ENCODE measurements at regions of chr19 and their contacts with region 1.

Region 1: DNA sequence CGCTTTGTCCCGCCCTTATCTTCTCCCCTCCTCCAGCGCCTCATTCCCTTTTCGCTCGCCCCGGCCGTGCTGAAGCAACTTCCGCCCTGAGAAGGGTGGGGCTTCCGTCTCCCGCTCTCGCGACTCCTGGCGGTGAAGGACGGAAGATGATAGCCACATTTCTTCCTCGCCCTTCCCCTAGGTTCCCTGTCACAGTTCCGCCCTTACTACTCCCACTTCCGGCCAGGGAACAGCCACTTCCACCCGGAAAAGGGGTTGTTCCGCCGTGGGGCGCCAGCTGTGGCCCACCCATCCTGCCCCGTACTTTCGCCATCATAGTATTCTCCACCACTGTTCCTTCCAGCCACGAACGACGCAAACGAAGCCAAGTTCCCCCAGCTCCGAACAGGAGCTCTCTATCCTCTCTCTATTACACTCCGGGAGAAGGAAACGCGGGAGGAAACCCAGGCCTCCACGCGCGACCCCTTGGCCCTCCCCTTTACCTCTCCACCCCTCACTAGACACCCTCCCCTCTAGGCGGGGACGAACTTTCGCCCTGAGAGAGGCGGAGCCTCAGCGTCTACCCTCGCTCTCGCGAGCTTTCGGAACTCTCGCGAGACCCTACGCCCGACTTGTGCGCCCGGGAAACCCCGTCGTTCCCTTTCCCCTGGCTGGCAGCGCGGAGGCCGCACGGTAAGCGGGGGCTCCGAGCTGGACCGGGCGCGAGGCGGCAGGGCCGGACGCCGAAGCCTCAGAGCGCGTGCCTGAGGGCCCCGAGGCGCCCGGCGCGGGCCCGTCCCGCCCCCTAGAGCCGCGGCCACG is at the start of gene RPS19:
- DNase-seq: peak; percentile 98 to 99
- H3K4me3 ChIP-seq: peak within 1 kb of the TSS; percentile 88
- H3K4me3 Mint-ChIP-seq: peak within 1 kb of the TSS; percentile 84
- H3K27ac Mint-ChIP-seq: peak within 1 kb of the TSS; percentile 94
- H3K4me1 ChIP-seq: peaks cover 18% of the 10 kb centered on the region
- H3K4me1 Mint-ChIP-seq: peaks cover 5% of the 10 kb centered on the region
- H3K27me3 ChIP-seq: no peaks in the 10 kb centered on the region
- H3K27me3 Mint-ChIP-seq: peaks cover 1% of the 10 kb centered on the region
- CTCF ChIP-seq: peak; percentile 63 to 81
- total RNA-seq, gene RPS19: 3,297 and 3,418 TPM in 2 replicates

Region 2: DNA sequence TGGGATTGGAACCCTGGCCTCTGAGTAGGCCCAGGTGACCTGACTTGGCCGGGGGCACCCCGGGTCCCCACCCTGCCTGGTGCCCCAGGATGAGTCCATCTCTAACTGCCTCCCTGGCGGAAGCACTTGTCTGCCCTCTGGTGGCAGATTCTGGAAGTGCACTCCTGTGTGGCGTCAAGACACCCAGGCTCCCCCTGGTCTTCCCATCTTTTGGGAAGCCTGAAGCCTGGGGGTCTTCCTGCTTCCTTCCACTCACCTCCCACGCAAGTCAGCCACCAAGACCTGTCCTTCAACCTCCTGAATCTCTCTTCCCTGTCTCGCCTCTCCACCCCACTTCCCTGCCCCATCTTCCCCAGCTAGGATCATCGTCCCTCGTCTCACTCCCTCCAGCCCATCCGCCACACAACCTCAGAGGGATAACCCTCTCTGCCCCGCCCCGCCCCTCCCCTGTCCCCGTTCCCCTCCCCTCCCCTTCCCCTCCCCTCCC is 91.9 kb after region 1 on chr19:
- CTCF ChIA-PET with region 1: no interaction called
- POLR2A ChIA-PET with region 1: no interaction called
- intact Hi-C with region 1: loop called (anchors 1 kb)
- DNase-seq: peak; percentile 84 to 89
- H3K4me3 ChIP-seq: no peak overlapping the region
- H3K4me3 Mint-ChIP-seq: no peak overlapping the region
- H3K27ac Mint-ChIP-seq: no peak overlapping the region
- H3K4me1 ChIP-seq: no peaks in the 10 kb centered on the region
- H3K4me1 Mint-ChIP-seq: no peaks in the 10 kb centered on the region
- H3K27me3 ChIP-seq: no peaks in the 10 kb centered on the region
- H3K27me3 Mint-ChIP-seq: no peaks in the 10 kb centered on the region
- CTCF ChIP-seq: peak; percentile 98 to 99

Region 3: DNA sequence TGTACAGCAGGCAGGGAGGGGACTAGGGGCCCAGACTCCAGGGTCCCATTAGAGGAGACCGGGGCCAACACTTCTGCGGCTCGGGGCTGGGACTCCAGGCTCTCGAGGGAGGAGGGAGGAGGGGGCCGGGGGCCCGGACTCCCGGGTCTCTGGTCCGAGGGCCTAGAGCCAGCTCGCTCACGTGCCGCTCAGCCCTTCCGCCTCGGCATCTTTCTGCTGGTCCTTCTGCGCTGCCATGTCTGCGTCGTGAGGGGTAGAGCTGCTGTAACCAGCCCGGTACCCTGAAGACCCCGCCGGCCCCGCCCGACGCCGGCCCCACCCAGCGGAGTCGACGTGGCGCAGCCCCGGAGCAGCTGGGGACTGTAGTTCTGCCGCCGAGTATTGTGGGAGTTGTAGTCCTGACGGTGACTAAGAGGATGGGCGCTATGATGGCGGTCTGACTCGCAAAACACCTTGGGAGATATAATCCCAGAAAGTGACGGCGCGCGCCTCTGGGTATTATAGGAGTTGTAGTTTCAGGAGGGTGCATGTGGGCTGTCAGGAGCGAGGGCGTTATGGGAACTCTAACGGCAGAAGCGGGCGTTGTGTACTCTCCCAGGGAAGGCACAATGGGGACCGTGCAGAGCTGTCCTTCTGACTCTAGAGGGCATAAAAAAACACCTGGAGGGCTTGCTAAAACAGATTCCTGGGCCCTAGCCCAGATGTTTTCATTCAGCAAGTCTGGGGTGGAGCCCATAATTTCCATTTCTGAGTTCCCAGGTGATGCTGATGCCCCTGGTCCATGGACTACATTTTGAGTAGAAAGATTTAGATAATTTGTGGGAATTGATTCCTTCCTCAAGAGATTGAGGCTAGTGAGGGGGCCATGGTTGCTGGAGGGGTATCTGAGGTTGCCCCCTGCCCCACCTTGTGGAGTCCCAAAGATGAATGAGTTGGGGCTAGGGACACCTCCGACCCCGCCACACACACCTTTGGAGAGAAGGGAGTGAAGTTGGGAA is 99.5 kb after region 1 on chr19 and contains the start of gene RABAC1:
- CTCF ChIA-PET with region 1: interaction called, 5 read pairs
- POLR2A ChIA-PET with region 1: interaction called, 10 read pairs
- intact Hi-C with region 1: loop called (anchors 1 kb)
- DNase-seq: peak; percentile 93 to 95
- H3K4me3 ChIP-seq: peak within 1 kb of the TSS; percentile 82
- H3K4me3 Mint-ChIP-seq: peak within 1 kb of the TSS; percentile 78
- H3K27ac Mint-ChIP-seq: peak within 1 kb of the TSS; percentile 81
- H3K4me1 ChIP-seq: peaks cover 14% of the 10 kb centered on the region
- H3K4me1 Mint-ChIP-seq: peaks cover 13% of the 10 kb centered on the region
- H3K27me3 ChIP-seq: no peaks in the 10 kb centered on the region
- H3K27me3 Mint-ChIP-seq: no peaks in the 10 kb centered on the region
- CTCF ChIP-seq: peak in 1 of 2 experiments; percentile 44
- total RNA-seq, gene RABAC1: 64.4 and 70.7 TPM in 2 replicates